Activated naive CD4-positive, alpha-beta T cell treated with anti-CD3 and anti-CD28 coated beads for 36 hours (primary cell): ENCODE measurements at regions of chr5 and their contacts with region 1.

Region 1: DNA sequence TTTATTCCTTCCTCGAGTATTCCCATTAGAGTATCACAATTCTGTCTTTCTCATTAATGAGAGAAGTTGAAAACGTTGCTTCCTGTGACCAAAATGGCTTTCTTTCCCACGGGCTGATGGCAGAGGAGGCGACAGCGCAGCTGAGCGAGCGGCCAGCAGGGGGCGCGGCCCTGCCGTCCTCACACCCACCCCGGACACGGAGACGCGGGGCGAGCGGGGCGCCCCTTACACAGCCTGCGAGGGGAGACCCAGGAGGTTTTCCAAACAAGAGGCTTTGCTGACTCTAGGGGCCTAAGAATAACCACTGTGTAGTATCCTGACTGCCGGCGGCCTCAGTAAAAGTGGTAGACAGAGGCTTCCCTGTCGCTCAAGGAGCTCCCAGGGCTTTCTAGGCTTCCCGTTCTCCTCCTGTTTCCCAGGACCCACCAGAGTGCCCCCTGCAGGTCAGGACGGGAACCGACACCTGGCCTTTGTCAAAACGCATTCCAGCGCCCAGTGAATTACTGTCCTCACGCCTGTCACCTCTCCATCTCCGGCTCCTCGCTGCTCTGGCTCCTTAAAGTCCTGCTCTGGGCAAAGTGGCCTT is 27.3 kb upstream of the FGF1 start:
- DNase-seq: peak; percentile 87
- H3K4me3 Mint-ChIP-seq: peak overlapping the region; percentile 71
- H3K27ac Mint-ChIP-seq: peak overlapping the region; percentile 3
- H3K4me1 Mint-ChIP-seq: peaks cover 3% of the 10 kb centered on the region
- H3K27me3 Mint-ChIP-seq: peaks cover 3% of the 10 kb centered on the region

Region 2: DNA sequence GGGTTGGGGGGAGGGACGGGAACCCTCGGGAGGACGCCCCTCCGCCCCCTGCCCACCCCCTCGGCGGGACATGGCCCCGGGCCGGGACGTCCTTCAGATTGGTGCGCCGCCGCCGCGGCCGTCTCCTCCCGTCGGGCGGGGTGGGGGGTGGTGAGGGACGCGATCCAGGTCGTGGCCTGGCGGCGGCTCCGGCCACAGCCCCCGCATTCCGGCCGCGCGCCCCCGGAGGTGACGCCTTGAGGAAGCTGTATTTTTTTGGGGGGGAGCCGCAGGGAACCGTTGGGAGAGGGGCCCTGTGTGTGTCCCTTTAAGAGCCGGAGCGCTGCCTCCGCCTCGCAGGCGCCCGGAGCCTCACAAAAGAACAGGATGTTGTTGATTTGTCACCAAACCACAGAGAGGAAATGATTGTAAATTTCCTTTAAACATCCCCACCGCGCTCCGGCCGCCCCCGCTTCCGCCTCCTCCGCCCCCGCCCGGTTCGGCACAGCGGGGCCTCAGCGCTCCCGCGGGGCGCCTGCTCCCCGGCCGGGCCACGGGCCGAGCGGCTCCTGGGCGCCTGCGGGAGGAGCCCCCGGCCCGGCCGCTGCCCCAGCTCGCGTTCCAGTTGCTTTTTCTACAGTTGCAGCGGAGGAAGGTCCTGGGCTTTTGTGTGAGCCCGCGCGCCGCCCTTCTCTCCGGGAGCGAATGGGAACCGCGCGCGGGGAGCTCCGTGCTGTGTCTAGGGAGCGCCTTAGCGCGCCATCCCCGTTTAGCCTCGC is 356.3 kb before region 1 on chr5:
- CTCF ChIA-PET with region 1: interaction called, 5 read pairs
- intact Hi-C with region 1: loop called (anchors 5 kb)
- DNase-seq: peak; percentile 93
- H3K4me3 Mint-ChIP-seq: peak overlapping the region; percentile 77
- H3K27ac Mint-ChIP-seq: peak overlapping the region; percentile 94
- H3K4me1 Mint-ChIP-seq: peaks cover 52% of the 10 kb centered on the region
- H3K27me3 Mint-ChIP-seq: no peaks in the 10 kb centered on the region

Region 3: GRCh38 chr5:142699184-142699720 is 14.0 kb before region 1 on chr5:
- CTCF ChIA-PET with region 1: interaction called, 47 read pairs
- intact Hi-C with region 1: no loop called
- DNase-seq: peak; percentile 90
- H3K4me3 Mint-ChIP-seq: no peak overlapping the region
- H3K27ac Mint-ChIP-seq: no peak overlapping the region
- H3K4me1 Mint-ChIP-seq: peaks cover 2% of the 10 kb centered on the region
- H3K27me3 Mint-ChIP-seq: no peaks in the 10 kb centered on the region

Region 4: GRCh38 chr5:142864725-142865260 is 151.6 kb after region 1 on chr5:
- CTCF ChIA-PET with region 1: interaction called, 20 read pairs
- intact Hi-C with region 1: loop called (anchors 1 kb)
- DNase-seq: no peak
- H3K4me3 Mint-ChIP-seq: no peak overlapping the region
- H3K27ac Mint-ChIP-seq: peak overlapping the region; percentile 89
- H3K4me1 Mint-ChIP-seq: peaks cover 30% of the 10 kb centered on the region
- H3K27me3 Mint-ChIP-seq: no peaks in the 10 kb centered on the region

Region 5: GRCh38 chr5:142888469-142889085 is 175.4 kb after region 1 on chr5:
- CTCF ChIA-PET with region 1: interaction called, 184 read pairs
- intact Hi-C with region 1: loop called (anchors 1 kb)
- DNase-seq: peak; percentile 15
- H3K4me3 Mint-ChIP-seq: no peak overlapping the region
- H3K27ac Mint-ChIP-seq: no peak overlapping the region
- H3K4me1 Mint-ChIP-seq: no peaks in the 10 kb centered on the region
- H3K27me3 Mint-ChIP-seq: no peaks in the 10 kb centered on the region

Region 6: GRCh38 chr5:143968011-143968878 is 1255.0 kb after region 1 on chr5:
- CTCF ChIA-PET with region 1: no interaction called
- intact Hi-C with region 1: loop called (anchors 10 kb)
- DNase-seq: peak; percentile 6
- H3K4me3 Mint-ChIP-seq: no peak overlapping the region
- H3K27ac Mint-ChIP-seq: no peak overlapping the region
- H3K4me1 Mint-ChIP-seq: no peaks in the 10 kb centered on the region
- H3K27me3 Mint-ChIP-seq: peaks cover 16% of the 10 kb centered on the region